Heart right ventricle (tissue), 16 donors: ENCODE measurements at regions of chr5 and their contacts with region 1.

Region 1: DNA sequence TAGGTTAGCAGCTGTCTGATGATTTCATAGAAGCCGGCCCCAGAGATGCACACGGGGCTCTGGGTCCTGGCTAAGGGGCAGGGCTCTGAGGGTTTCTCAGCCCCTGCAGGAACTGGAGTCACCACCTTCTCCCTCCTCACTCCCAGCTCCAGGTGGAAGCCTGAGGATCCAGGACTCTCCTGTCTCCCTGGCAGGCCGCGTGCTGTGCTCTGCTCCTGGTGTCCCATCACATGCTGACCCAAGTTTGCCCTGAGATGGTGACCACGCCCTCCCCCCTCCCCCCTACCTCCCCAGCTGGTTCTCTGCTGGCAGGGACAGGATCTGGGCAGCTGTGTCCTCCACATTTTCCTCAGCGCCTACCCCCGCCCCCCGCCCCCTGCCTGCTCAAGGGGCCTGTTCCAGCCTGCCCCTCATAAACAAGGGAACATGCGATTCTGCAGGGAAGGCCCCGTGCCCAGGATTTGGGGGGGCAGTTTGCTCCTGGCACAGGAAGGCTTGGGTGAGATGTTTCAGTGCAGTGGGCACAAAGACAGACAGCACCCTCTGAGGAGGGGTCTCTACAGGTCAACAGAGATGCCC is 87.4 kb downstream of the PSD2 start:
- DNase-seq: no peak
- ATAC-seq: no peak
- H3K4me3 ChIP-seq: no peak overlapping the region
- H3K27ac ChIP-seq: no peak overlapping the region
- H3K4me1 ChIP-seq: peaks cover 0 to 42% (median 20%) of the 10 kb centered on the region in 9 donors
- H3K27me3 ChIP-seq: no peaks in the 10 kb centered on the region
- CTCF ChIP-seq: no peak

Region 2: DNA sequence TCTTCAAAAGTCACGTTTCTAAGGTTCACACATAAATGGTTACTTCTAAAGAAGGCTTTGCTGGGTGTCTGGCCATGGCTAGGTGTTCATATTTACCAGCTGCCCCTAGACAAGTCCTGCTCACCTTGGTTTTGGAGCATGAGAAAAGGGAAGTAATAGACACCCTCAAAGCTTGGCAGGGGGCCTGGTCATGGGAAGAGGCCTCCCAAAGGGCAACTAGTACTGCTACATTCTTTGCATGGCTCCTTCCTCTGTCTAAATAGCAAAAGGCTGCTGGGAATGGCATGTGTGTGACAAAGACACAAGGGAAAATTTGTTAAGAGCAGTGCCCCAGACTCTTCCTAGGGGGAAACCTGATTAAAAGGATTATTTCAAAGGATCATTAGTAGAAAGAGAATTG is 66.7 kb after region 1 on chr5:
- intact Hi-C with region 1: loop called in 1 of 10 experiments (anchors 5 kb)
- DNase-seq: peak; percentile 30 to 65
- ATAC-seq: peak in 7 of 8 donors; percentile 25 to 87 (median 77)
- H3K4me3 ChIP-seq: no peak overlapping the region
- H3K27ac ChIP-seq: peak overlapping the region in 5 of 10 donors; percentile 30 to 71 (median 60)
- H3K4me1 ChIP-seq: peaks cover 0 to 52% (median 18%) of the 10 kb centered on the region in 9 donors
- H3K27me3 ChIP-seq: no peaks in the 10 kb centered on the region
- CTCF ChIP-seq: no peak